ENCODE measurements at regions of chr15 and their contacts with region 1.

Region 1: DNA sequence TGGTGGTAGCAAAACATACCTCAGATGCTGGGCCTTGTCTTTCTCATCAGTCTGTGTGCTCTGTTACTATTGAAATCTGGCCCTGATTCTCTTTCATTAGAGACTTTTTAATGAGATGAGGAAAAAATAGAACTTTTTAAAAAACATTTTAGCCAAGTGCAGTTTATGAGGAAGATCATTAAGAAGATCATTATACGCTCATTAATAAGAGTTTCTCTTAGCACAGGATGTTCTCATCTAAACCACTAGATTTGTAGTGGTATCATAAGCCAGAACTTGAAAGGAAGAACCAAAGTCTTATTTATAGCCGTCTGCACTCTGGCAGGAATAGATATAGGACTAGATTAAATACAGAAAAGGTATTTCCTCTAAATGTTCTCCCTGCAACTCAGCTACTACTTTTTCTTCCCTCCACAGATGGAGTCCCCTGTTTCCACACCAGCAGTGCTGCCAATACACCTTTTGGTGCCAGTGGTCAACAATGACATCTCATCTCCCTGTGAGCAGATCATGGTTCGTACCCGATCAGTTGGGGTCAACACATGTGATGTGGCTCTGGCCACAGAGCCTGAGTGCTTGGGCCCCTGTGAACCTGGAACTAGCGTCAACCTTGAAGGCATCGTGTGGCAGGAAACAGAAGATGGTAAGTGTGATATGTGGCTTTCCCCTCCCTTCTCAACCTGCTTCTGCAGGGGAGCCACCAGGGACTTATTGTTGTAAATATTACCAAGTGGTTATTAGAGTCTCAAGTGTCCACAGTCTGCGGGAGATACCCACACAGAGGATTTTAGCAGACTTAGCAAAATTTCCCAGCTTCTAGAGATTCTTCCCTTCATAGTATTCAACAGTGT is 152.8 kb downstream of the RBPMS2 start:
- DNase-seq: peak; percentile 76 to 84 (median 81)
- H3K4me3 ChIP-seq: peak overlapping the region in 1 of 2 donors; percentile 48
- H3K4me3 Mint-ChIP-seq: peak overlapping the region; percentile 66 to 85 (median 77)
- H3K27ac ChIP-seq: peak overlapping the region; percentile 34
- H3K27ac Mint-ChIP-seq: peak overlapping the region; percentile 83 to 96 (median 93)
- H3K4me1 ChIP-seq: peaks cover 96% of the 10 kb centered on the region
- H3K4me1 Mint-ChIP-seq: peaks cover 66 to 94% (median 84%) of the 10 kb centered on the region in 4 donors
- H3K27me3 ChIP-seq: no peaks in the 10 kb centered on the region
- H3K27me3 Mint-ChIP-seq: no peaks in the 10 kb centered on the region

Region 2: GRCh38 chr15:64568765-64569164 is 53.9 kb before region 1 on chr15:
- CTCF ChIA-PET with region 1: no interaction called
- POLR2A ChIA-PET with region 1: interaction called, 3 read pairs
- intact Hi-C with region 1: loop called (anchors 2 kb)
- DNase-seq: peak in 1 of 5 donors; percentile 4
- H3K4me3 ChIP-seq: no peak overlapping the region
- H3K4me3 Mint-ChIP-seq: peak overlapping the region in 4 of 8 donors; percentile 13 to 38 (median 29)
- H3K27ac ChIP-seq: no peak overlapping the region
- H3K27ac Mint-ChIP-seq: peak overlapping the region; percentile 8 to 82 (median 39)
- H3K4me1 ChIP-seq: peaks cover 32% of the 10 kb centered on the region
- H3K4me1 Mint-ChIP-seq: peaks cover 43 to 73% (median 54%) of the 10 kb centered on the region in 4 donors
- H3K27me3 ChIP-seq: no peaks in the 10 kb centered on the region
- H3K27me3 Mint-ChIP-seq: no peaks in the 10 kb centered on the region

Region 3: DNA sequence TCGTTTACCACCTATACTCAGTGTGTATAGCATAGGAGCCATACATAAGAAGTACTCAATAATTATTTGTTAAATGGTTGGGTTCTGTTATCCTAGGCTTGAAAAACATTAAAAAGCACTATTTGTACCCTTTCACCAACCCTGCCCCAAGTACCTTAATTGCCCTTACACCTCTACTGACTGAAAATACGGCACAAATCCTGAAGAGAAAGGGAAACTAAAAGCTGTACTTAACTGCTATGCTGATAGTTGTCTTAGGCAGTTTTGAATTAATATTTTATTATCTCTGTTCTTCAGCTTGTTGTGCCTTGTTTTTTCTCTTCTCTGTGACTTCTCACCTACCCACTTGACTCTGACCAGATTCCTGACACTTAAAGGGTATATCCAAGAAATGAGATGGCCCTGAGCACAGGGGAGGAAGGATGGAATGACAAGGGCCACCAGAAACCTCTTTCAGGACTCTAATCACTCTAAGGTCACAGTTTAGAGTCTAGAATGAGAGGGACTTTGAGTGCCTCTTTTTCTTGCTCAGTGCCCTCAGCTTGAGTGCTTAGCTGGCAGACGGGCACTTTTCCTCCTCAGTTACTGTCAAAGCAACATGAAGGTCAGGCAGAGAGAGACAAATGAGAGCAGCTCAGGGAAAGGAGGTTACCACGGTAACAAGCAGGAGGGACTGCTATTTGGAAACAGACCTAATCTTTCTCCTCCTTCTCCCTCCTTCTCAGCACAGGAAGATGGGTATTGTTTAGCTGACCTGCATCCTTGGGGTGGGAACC is 25.7 kb before region 1 on chr15:
- CTCF ChIA-PET with region 1: no interaction called
- POLR2A ChIA-PET with region 1: interaction called, 12 read pairs
- intact Hi-C with region 1: loop called (anchors 2 kb)
- DNase-seq: peak; percentile 50 to 62 (median 52)
- H3K4me3 ChIP-seq: peak overlapping the region; percentile 11 to 33
- H3K4me3 Mint-ChIP-seq: peak overlapping the region; percentile 81 to 92 (median 88)
- H3K27ac ChIP-seq: peak overlapping the region; percentile 64
- H3K27ac Mint-ChIP-seq: peak overlapping the region; percentile 89 to 98 (median 94)
- H3K4me1 ChIP-seq: peaks cover 60% of the 10 kb centered on the region
- H3K4me1 Mint-ChIP-seq: peaks cover 44 to 65% (median 55%) of the 10 kb centered on the region in 4 donors
- H3K27me3 ChIP-seq: no peaks in the 10 kb centered on the region
- H3K27me3 Mint-ChIP-seq: no peaks in the 10 kb centered on the region

Region 4: DNA sequence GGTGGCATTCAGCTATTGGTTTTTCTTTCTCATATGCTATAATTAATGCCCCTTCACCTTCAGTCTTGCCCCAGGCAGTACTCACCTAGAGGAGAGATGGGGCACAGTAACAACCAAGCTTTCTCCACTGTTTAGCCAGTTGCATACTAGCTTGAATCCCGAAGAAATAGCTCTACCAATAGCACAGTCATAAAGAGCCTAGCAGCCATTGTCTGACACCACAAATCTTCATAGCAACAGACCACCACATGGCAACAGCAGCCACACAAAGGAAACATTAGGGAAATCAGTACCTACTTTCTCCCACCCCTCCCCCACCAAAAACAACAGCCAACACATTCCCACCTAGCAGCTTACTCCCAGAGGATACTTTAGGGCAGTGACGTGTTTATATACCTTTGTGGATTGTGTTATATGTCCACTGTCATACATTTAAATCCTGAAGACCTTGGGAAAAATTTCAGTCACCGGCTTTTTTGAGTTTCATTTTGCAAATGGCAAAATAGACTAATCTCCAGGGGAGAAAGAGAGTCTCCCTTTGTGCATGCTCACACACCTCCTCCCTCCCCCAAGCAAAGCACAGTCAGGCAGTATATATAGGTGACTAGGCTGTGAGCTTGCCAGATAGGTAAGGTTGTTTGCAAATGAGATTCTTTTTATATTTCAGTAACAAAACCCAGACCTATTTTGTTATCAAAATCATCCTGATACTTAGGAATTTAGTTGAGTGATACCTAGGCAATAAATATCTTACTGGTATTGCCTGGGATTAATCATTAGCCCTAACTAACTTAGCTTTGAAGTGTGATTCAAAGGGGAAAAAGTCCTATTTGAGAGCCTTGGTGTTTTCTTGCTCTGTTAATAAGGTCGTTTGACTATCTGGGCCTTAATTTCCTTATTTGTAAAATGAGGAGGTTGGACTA is 12.2 kb after region 1 on chr15:
- CTCF ChIA-PET with region 1: interaction called, 5 read pairs
- POLR2A ChIA-PET with region 1: interaction called, 10 read pairs
- intact Hi-C with region 1: loop called (anchors 1 kb)
- DNase-seq: peak in 4 of 5 donors; percentile 13 to 61 (median 25)
- H3K4me3 ChIP-seq: peak overlapping the region in 1 of 2 donors; percentile 6
- H3K4me3 Mint-ChIP-seq: peak overlapping the region; percentile 52 to 86 (median 76)
- H3K27ac ChIP-seq: peak overlapping the region; percentile 56
- H3K27ac Mint-ChIP-seq: peak overlapping the region; percentile 87 to 94 (median 88)
- H3K4me1 ChIP-seq: peaks cover 73% of the 10 kb centered on the region
- H3K4me1 Mint-ChIP-seq: peaks cover 40 to 75% (median 55%) of the 10 kb centered on the region in 4 donors
- H3K27me3 ChIP-seq: no peaks in the 10 kb centered on the region
- H3K27me3 Mint-ChIP-seq: no peaks in the 10 kb centered on the region

Measured in CD4-positive, alpha-beta memory T cell (primary cell).